ENCODE measurements at regions of chr14 and their contacts with region 1.

Region 1: DNA sequence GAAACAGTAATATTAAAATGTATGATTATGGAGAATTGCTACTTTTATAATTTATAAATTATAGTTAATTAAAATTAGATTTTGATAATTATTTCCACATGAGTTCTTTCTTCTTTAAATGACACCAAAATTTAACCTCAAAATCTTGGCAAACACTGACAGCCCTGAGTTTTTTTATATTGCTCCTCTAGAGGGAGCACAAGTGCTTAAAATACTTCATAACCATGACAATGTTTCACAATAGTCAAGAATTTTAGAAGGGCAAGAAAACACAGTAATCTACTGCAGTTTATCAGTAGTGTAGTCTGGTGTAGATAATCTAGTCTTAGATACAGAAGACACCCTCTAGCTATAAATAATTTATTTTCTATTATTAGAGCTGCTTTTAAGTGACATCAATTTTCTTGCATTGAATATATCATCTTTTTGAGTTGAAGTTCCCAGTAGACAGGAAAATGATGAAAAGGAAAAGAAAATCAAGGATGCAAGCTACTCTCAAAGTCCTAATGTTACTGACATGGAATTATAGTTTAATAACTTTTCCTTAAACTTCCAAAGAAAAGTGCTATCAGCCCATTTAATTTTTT is 14.3 kb upstream of the PTGER2 start:
- DNase-seq: no peak
- ATAC-seq: peak; percentile 60

Region 2: GRCh38 chr14:52369305-52369801 is 69.6 kb after region 1 on chr14:
- intact Hi-C with region 1: loop called in 1 of 2 experiments (anchors 10 kb)
- DNase-seq: no peak
- ATAC-seq: no peak

Region 3: GRCh38 chr14:52473557-52473956 is 173.8 kb after region 1 on chr14:
- intact Hi-C with region 1: loop called in 1 of 2 experiments (anchors 5 kb)
- DNase-seq: no peak
- ATAC-seq: peak; percentile 75

Region 4: DNA sequence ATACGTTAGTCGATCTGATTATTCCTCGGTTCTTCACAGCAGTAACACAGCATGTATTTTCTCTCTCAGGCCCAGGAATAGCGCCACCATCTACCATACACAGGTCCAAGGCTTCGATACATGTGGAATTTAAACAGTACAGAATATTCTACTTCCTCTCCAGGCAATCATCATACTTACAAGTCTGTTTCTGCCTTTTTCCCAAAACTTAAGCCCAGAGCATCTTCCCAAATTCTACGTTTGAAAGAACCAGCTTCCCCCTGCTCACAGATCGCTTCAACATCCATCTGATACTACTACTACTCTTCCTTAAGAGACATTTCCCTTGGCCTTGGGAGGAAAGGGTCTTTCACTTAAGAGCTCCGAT is 251.9 kb after region 1 on chr14:
- intact Hi-C with region 1: no loop called
- DNase-seq: no peak
- ATAC-seq: peak; percentile 28